T-cell (primary cell): ENCODE measurements at regions of chr11 and their contacts with region 1.

Region 1: DNA sequence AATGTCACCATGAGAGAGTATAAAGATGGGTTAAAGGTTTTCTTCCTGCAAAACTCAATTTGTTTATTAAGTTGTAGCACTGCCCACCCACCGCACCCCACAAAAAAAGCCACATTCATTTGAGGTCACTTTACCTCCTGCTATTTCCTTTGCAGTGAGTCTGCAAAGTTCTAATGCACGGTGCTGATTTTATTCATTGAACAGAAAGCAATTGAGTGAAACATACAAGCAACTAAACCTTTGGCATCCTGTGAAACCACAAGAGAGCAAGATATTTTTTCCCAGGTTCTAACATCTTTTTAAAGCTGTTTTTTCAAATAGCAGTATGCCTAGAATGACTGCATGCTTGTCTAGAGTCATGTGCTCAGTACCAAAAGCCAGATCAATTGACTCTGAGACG is 39.0 kb downstream of the RRAS2 start:
- DNase-seq: peak in 32 of 35 experiments; percentile 4 to 67 (median 36)
- ATAC-seq: peak; percentile 75 to 95 (median 90)
- H3K4me3 ChIP-seq: no peak overlapping the region
- H3K4me3 Mint-ChIP-seq: peak overlapping the region; percentile 0 to 42 (median 31)
- H3K27ac ChIP-seq: no peak overlapping the region
- H3K27ac Mint-ChIP-seq: peak overlapping the region; percentile 3 to 17
- H3K4me1 ChIP-seq: peaks cover 7 to 25% of the 10 kb centered on the region in 2 experiments
- H3K4me1 Mint-ChIP-seq: peaks cover 45 to 80% (median 54%) of the 10 kb centered on the region in 3 donors
- H3K27me3 ChIP-seq: no peaks in the 10 kb centered on the region
- H3K27me3 Mint-ChIP-seq: no peaks in the 10 kb centered on the region

Region 2: DNA sequence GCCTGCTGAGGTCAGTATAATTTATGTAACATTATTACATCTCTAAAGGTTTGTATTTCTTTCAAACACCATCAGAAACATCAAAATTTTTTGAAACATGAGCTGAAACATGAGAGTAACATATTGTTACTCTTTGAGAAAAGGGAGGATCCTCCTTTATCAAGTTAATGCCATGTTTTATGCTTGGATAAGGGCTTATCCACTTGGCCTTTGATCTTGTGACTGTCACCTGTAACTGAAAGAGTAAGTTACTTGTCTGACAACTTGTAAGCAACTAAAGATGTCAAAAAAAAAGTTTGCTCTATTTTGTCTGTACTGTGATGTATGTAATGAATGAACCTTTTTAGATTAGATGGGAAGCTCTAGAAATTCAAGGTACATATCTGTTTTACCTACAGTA is 591.9 kb before region 1 on chr11:
- CTCF ChIA-PET with region 1: no interaction called
- POLR2A ChIA-PET with region 1: interaction called in 1 of 2 experiments, 10 read pairs
- DNase-seq: no peak
- ATAC-seq: no peak
- H3K4me3 ChIP-seq: no peak overlapping the region
- H3K4me3 Mint-ChIP-seq: no peak overlapping the region
- H3K27ac ChIP-seq: no peak overlapping the region
- H3K27ac Mint-ChIP-seq: no peak overlapping the region
- H3K4me1 ChIP-seq: no peaks in the 10 kb centered on the region
- H3K4me1 Mint-ChIP-seq: no peaks in the 10 kb centered on the region
- H3K27me3 ChIP-seq: no peaks in the 10 kb centered on the region
- H3K27me3 Mint-ChIP-seq: no peaks in the 10 kb centered on the region

Region 3: GRCh38 chr11:14308114-14308896 is 11.7 kb before region 1 on chr11:
- CTCF ChIA-PET with region 1: interaction called, 4 to 10 read pairs
- POLR2A ChIA-PET with region 1: interaction called in 1 of 2 experiments, 7 read pairs
- DNase-seq: peak in 1 of 35 experiments; percentile 59
- ATAC-seq: peak; percentile 72 to 80 (median 76)
- H3K4me3 ChIP-seq: no peak overlapping the region
- H3K4me3 Mint-ChIP-seq: no peak overlapping the region
- H3K27ac ChIP-seq: no peak overlapping the region
- H3K27ac Mint-ChIP-seq: no peak overlapping the region
- H3K4me1 ChIP-seq: peaks cover 0 to 7% of the 10 kb centered on the region in 2 experiments
- H3K4me1 Mint-ChIP-seq: peaks cover 9 to 34% (median 10%) of the 10 kb centered on the region in 3 donors
- H3K27me3 ChIP-seq: no peaks in the 10 kb centered on the region
- H3K27me3 Mint-ChIP-seq: no peaks in the 10 kb centered on the region

Region 4: DNA sequence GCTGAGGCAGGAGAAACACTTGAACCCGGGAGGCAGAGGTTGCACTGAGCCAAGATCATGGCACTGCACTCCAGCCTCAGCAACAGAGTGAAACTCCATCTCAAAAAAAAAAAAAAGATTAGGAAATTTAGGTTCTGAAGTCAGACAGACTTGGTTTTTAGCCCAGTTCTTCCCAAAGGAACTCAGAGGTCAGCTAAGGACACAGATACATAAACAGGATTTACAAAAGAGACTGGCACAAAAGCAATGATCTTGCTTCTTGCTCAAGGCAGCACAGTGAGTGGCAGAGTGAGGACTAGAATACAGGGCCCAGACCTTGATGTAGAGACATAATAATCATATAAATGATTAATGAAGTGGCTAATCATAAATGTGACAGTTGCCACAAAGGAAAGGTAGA is 64.3 kb after region 1 on chr11:
- CTCF ChIA-PET with region 1: no interaction called
- POLR2A ChIA-PET with region 1: no interaction called
- DNase-seq: no peak
- ATAC-seq: no peak
- H3K4me3 ChIP-seq: no peak overlapping the region
- H3K4me3 Mint-ChIP-seq: no peak overlapping the region
- H3K27ac ChIP-seq: no peak overlapping the region
- H3K27ac Mint-ChIP-seq: no peak overlapping the region
- H3K4me1 ChIP-seq: peaks cover 5% of the 10 kb centered on the region in 2 experiments
- H3K4me1 Mint-ChIP-seq: peaks cover 4 to 8% (median 6%) of the 10 kb centered on the region in 3 donors
- H3K27me3 ChIP-seq: peaks cover 0 to 10% of the 10 kb centered on the region in 2 experiments
- H3K27me3 Mint-ChIP-seq: peaks cover 7% of the 10 kb centered on the region in 2 donors

Region 5: DNA sequence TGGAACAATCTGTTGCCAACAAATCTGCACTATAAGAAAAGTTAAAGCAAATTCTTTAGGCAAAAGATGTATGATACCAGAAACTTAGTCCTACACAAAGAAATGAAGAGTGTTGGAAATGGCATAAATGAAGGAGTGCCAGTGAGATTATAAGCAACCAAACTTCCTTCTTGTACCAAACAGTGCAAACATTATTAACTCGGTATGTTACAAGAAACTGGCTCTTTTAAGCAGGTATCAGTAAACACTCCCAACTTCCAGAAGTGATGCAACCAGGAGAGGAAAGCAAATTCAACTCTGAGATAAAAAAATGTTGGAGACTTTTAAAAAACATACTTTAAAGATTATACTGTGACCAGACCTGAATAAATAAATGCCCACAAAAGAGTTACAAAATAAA is 151.1 kb after region 1 on chr11:
- CTCF ChIA-PET with region 1: no interaction called
- POLR2A ChIA-PET with region 1: no interaction called
- DNase-seq: no peak
- ATAC-seq: no peak
- H3K4me3 ChIP-seq: no peak overlapping the region
- H3K4me3 Mint-ChIP-seq: no peak overlapping the region
- H3K27ac ChIP-seq: no peak overlapping the region
- H3K27ac Mint-ChIP-seq: peak overlapping the region; percentile 17 to 40
- H3K4me1 ChIP-seq: peaks cover 0 to 3% of the 10 kb centered on the region in 2 experiments
- H3K4me1 Mint-ChIP-seq: peaks cover 43 to 59% (median 50%) of the 10 kb centered on the region in 3 donors
- H3K27me3 ChIP-seq: no peaks in the 10 kb centered on the region
- H3K27me3 Mint-ChIP-seq: no peaks in the 10 kb centered on the region

Region 6: GRCh38 chr11:14756349-14756748 is 436.3 kb after region 1 on chr11:
- CTCF ChIA-PET with region 1: no interaction called
- POLR2A ChIA-PET with region 1: interaction called in 1 of 2 experiments, 15 read pairs
- DNase-seq: no peak
- ATAC-seq: no peak
- H3K4me3 ChIP-seq: no peak overlapping the region
- H3K4me3 Mint-ChIP-seq: no peak overlapping the region
- H3K27ac ChIP-seq: no peak overlapping the region
- H3K27ac Mint-ChIP-seq: no peak overlapping the region
- H3K4me1 ChIP-seq: peaks cover 13 to 24% of the 10 kb centered on the region in 2 experiments
- H3K4me1 Mint-ChIP-seq: peaks cover 53 to 63% (median 53%) of the 10 kb centered on the region in 3 donors
- H3K27me3 ChIP-seq: no peaks in the 10 kb centered on the region
- H3K27me3 Mint-ChIP-seq: no peaks in the 10 kb centered on the region